CD4-positive, alpha-beta memory T cell (primary cell): ENCODE measurements at regions of chr9 and their contacts with region 1.

Region 1: GRCh38 chr9:86354011-86354817 is at the start of gene TUT7:
- DNase-seq: peak; percentile 92 to 96 (median 93)
- H3K4me3 ChIP-seq: peak within 1 kb of the TSS; percentile 69 to 75
- H3K4me3 Mint-ChIP-seq: peak within 1 kb of the TSS; percentile 91 to 98 (median 97)
- H3K27ac ChIP-seq: peak within 1 kb of the TSS; percentile 84
- H3K27ac Mint-ChIP-seq: peak within 1 kb of the TSS; percentile 85 to 99 (median 97)
- H3K4me1 ChIP-seq: peaks cover 46% of the 10 kb centered on the region
- H3K4me1 Mint-ChIP-seq: peaks cover 23 to 60% (median 43%) of the 10 kb centered on the region in 4 donors
- H3K27me3 ChIP-seq: no peaks in the 10 kb centered on the region
- H3K27me3 Mint-ChIP-seq: no peaks in the 10 kb centered on the region
- total RNA-seq, gene TUT7: 60.2 to 64.1 TPM

Region 2: DNA sequence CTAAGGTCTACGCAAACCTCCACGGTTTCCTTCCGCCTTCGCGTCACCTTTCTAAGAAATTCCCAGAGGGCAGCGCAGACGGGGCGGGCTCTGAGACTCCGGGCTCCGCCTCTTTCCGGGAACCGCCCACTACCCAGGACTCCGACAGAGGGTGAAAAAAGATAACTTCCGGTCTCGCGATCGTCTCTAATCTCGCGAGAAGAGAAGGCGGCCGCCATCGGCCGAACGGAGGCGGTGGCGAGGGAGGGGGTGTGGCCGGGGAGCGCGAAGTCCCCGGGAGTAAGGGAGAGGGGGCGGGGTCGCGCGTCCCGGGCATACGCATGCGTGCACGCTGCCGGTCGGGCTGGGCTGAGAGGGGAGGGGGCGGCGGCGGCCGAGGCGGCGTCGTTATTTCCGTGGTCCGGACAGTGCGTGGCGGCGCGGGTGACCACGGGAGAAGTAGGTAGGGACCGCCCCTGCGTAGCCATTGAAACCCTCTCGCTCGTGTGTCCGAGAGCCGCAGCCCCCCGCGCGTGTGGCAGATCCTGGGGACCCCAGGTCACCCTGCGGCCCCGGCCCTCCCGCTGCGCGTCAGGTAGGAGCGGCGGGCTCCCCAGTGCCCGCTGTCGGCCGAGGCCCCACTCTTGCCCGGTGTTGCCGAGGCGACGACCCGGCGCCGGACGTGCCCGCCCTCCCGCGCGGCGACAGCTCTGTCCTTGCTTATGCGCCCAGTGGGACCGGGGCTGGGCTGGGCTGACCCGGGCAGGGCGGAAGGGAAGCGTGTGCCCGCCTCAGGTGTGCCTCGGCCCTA is 413.2 kb before region 1 on chr9 and contains the start of gene NAA35:
- CTCF ChIA-PET with region 1: interaction called, 3 read pairs
- POLR2A ChIA-PET with region 1: no interaction called
- intact Hi-C with region 1: loop called (anchors 1 kb)
- DNase-seq: peak; percentile 99
- H3K4me3 ChIP-seq: peak within 1 kb of the TSS; percentile 43 to 73
- H3K4me3 Mint-ChIP-seq: peak within 1 kb of the TSS; percentile 85 to 95 (median 89)
- H3K27ac ChIP-seq: peak within 1 kb of the TSS; percentile 87
- H3K27ac Mint-ChIP-seq: peak within 1 kb of the TSS in 6 of 7 donors; percentile 91 to 99 (median 96)
- H3K4me1 ChIP-seq: peaks cover 45% of the 10 kb centered on the region
- H3K4me1 Mint-ChIP-seq: peaks cover 12 to 19% (median 16%) of the 10 kb centered on the region in 4 donors
- H3K27me3 ChIP-seq: no peaks in the 10 kb centered on the region
- H3K27me3 Mint-ChIP-seq: no peaks in the 10 kb centered on the region
- total RNA-seq, gene NAA35: 24.8 to 27.8 TPM

Region 3: GRCh38 chr9:86185872-86186271 is 168.3 kb before region 1 on chr9:
- CTCF ChIA-PET with region 1: no interaction called
- POLR2A ChIA-PET with region 1: no interaction called
- intact Hi-C with region 1: no loop called
- DNase-seq: no peak
- H3K4me3 ChIP-seq: no peak overlapping the region
- H3K4me3 Mint-ChIP-seq: no peak overlapping the region
- H3K27ac ChIP-seq: no peak overlapping the region
- H3K27ac Mint-ChIP-seq: no peak overlapping the region
- H3K4me1 ChIP-seq: no peaks in the 10 kb centered on the region
- H3K4me1 Mint-ChIP-seq: no peaks in the 10 kb centered on the region
- H3K27me3 ChIP-seq: no peaks in the 10 kb centered on the region
- H3K27me3 Mint-ChIP-seq: peaks cover 6 to 10% of the 10 kb centered on the region in 2 donors

Region 4: GRCh38 chr9:86303316-86303975 is 50.8 kb before region 1 on chr9:
- CTCF ChIA-PET with region 1: no interaction called
- POLR2A ChIA-PET with region 1: interaction called, 4 read pairs
- intact Hi-C with region 1: loop called (anchors 2 kb)
- DNase-seq: peak; percentile 33 to 78 (median 46)
- H3K4me3 ChIP-seq: no peak overlapping the region
- H3K4me3 Mint-ChIP-seq: peak overlapping the region in 5 of 8 donors; percentile 1 to 14 (median 3)
- H3K27ac ChIP-seq: no peak overlapping the region
- H3K27ac Mint-ChIP-seq: peak overlapping the region; percentile 19 to 94 (median 85)
- H3K4me1 ChIP-seq: peaks cover 16% of the 10 kb centered on the region
- H3K4me1 Mint-ChIP-seq: peaks cover 21 to 34% (median 27%) of the 10 kb centered on the region in 4 donors
- H3K27me3 ChIP-seq: no peaks in the 10 kb centered on the region
- H3K27me3 Mint-ChIP-seq: no peaks in the 10 kb centered on the region

Region 5: GRCh38 chr9:86329649-86330048 is 24.6 kb before region 1 on chr9:
- CTCF ChIA-PET with region 1: no interaction called
- POLR2A ChIA-PET with region 1: no interaction called
- intact Hi-C with region 1: no loop called
- DNase-seq: no peak
- H3K4me3 ChIP-seq: no peak overlapping the region
- H3K4me3 Mint-ChIP-seq: no peak overlapping the region
- H3K27ac ChIP-seq: no peak overlapping the region
- H3K27ac Mint-ChIP-seq: peak overlapping the region in 1 of 7 donors; percentile 46
- H3K4me1 ChIP-seq: no peaks in the 10 kb centered on the region
- H3K4me1 Mint-ChIP-seq: peaks cover 0 to 18% (median 5%) of the 10 kb centered on the region in 4 donors
- H3K27me3 ChIP-seq: no peaks in the 10 kb centered on the region
- H3K27me3 Mint-ChIP-seq: no peaks in the 10 kb centered on the region

Region 6: GRCh38 chr9:86341006-86341491 is 13.2 kb before region 1 on chr9:
- CTCF ChIA-PET with region 1: interaction called, 3 read pairs
- POLR2A ChIA-PET with region 1: interaction called, 7 read pairs
- intact Hi-C with region 1: loop called (anchors 1 kb)
- DNase-seq: no peak
- H3K4me3 ChIP-seq: no peak overlapping the region
- H3K4me3 Mint-ChIP-seq: no peak overlapping the region
- H3K27ac ChIP-seq: no peak overlapping the region
- H3K27ac Mint-ChIP-seq: peak overlapping the region; percentile 43 to 90 (median 56)
- H3K4me1 ChIP-seq: peaks cover 43% of the 10 kb centered on the region
- H3K4me1 Mint-ChIP-seq: peaks cover 27 to 66% (median 45%) of the 10 kb centered on the region in 4 donors
- H3K27me3 ChIP-seq: no peaks in the 10 kb centered on the region
- H3K27me3 Mint-ChIP-seq: no peaks in the 10 kb centered on the region